CD8-positive, alpha-beta T cell (primary cell): ENCODE measurements at regions of chrX and their contacts with region 1.

Region 1: DNA sequence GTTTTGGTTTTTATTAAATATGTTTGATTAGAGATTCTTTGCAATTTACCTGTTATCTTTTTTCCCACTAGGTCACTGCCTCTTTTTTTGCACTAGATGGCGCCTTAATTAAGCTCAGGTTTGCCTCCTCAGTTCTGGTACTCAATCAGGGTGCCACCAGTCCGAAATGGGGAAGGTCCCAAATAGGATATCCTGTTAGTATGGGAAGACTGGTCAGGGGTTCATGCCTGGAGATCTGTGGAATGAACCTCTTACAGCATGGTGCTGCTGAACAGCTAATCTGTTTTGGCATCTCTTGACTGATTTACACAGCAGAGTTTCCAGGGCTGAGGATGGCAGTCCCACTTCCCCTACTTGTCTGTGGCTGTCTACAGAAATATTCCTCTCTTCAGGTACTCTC is 24.2 kb upstream of the VSIG1 start:
- DNase-seq: peak in 5 of 9 experiments; percentile 0 to 51 (median 28)
- ATAC-seq: no peak
- H3K4me3 ChIP-seq: peak overlapping the region in 1 of 2 experiments; percentile 17
- H3K4me3 Mint-ChIP-seq: peak overlapping the region; percentile 83
- H3K27ac ChIP-seq: peak overlapping the region; percentile 10 to 19
- H3K27ac Mint-ChIP-seq: peak overlapping the region; percentile 97
- H3K4me1 ChIP-seq: peaks cover 45% of the 10 kb centered on the region
- H3K4me1 Mint-ChIP-seq: peaks cover 70% of the 10 kb centered on the region
- H3K27me3 ChIP-seq: no peaks in the 10 kb centered on the region
- H3K27me3 Mint-ChIP-seq: no peaks in the 10 kb centered on the region
- CTCF ChIP-seq: no peak

Region 2: GRCh38 chrX:107826238-107827029 is 194.2 kb before region 1 on chrX:
- CTCF ChIA-PET with region 1: no interaction called
- POLR2A ChIA-PET with region 1: no interaction called
- intact Hi-C with region 1: loop called in 1 of 2 experiments (anchors 5 kb)
- DNase-seq: peak; percentile 2 to 67 (median 25)
- ATAC-seq: peak; percentile 66
- H3K4me3 ChIP-seq: peak overlapping the region; percentile 52 to 61
- H3K4me3 Mint-ChIP-seq: peak overlapping the region; percentile 89
- H3K27ac ChIP-seq: peak overlapping the region in 1 of 2 experiments; percentile 69
- H3K27ac Mint-ChIP-seq: peak overlapping the region; percentile 86
- H3K4me1 ChIP-seq: peaks cover 25% of the 10 kb centered on the region
- H3K4me1 Mint-ChIP-seq: peaks cover 43% of the 10 kb centered on the region
- H3K27me3 ChIP-seq: no peaks in the 10 kb centered on the region
- H3K27me3 Mint-ChIP-seq: peaks cover 8% of the 10 kb centered on the region
- CTCF ChIP-seq: no peak